ENCODE measurements at regions of chr15 and their contacts with region 1.

Region 1: DNA sequence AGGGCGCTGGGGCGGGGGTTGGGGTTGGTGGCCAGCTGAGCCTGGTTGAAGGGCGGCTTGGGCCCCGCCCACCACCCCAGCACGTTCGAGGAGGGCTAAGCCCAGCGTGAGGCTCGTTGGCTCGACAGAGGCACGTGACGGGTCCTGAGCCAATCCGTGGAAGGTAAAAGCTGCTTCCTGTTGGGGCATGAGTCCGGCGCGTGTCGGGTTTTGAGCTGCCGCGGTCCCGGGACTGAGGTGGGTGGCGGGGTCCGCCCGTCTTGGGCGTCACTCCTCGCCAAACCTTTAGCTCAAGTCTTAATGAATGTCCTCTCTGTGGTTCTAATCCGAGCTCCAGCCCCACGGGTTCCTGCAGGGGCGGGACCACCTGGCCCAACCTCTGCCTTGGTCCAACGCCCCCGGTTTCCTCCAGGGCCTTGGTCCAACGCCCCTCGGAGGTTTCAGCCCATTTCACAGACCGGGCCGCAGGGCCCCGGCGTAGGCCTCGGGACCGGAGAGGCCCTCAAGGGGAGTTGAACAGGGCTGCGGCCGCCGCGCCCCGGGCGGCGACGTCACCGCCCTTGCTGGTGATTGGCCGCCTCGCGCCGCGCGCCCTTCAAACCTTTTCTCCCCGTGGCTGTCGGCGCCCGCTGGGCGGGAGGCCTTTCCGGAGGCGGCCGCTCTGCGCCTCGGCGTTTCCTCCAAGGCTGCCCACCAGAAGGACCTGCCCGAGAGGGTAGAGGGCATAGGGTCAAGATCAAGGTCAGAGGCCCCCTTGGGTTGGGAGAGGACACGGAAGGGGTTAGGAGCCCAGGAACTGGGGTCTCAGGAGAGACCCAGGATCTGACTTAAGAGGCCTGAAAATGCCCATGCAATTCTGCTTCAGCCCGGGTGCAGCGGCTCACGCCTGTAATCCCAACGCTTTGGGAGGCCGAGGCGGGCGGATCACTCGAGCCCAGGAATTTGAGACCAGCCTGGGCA is at the start of gene RCCD1:
- DNase-seq: peak; percentile 94 to 99 (median 97)

Region 2: GRCh38 chr15:90982135-90982534 is 27.1 kb after region 1 on chr15:
- intact Hi-C with region 1: no loop called
- DNase-seq: no peak

Region 3: GRCh38 chr15:90994417-90995311 is 39.7 kb after region 1 on chr15 and contains the start of gene PRC1:
- intact Hi-C with region 1: no loop called
- DNase-seq: peak; percentile 93 to 99 (median 99)

Region 4: GRCh38 chr15:91022075-91022835 is 67.3 kb after region 1 on chr15 and contains the start of gene VPS33B:
- intact Hi-C with region 1: loop called (anchors 10 kb)
- DNase-seq: peak; percentile 78 to 96 (median 90)

Region 5: DNA sequence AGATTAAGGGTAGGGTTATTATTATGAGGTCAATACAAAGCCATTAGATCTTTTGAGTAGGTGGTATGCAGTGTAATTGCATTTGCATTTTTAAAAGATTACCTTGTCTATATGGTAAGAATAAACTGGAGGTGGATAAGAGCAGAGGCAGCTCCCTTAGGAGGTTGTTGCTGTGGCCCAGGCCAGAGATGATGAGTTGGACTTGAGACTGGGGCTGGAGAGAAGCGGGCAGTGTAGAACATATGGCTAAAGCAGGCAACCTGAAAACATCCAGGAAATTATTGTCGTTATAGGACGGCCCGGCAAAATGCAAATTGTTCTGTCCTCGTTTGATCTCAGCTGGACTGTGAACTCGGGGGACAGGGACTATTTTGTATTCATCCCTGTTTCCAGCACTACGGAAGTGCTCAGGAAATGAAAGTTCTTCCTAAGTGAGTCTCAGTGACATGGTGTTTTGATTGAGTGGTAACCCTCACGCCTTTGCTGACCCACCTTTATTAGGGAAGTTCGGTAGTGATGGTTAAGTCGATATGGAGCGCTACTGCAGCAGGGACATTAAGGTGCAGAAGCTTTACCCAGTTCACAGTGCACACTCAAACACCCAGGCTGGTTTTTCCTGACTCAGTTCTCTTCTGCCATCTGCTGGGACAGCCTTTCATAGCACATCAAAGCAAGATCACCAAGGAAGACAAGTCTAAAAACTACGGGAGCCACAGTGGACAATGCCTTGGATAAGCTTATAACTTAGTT is 94.6 kb after region 1 on chr15:
- intact Hi-C with region 1: loop called (anchors 5 kb)
- DNase-seq: peak in 41 of 42 donors; percentile 37 to 89 (median 70)

Region 6: GRCh38 chr15:91271565-91272153 is 316.7 kb after region 1 on chr15:
- intact Hi-C with region 1: loop called (anchors 5 kb)
- DNase-seq: peak; percentile 18 to 89 (median 68)

Measured in head of caudate nucleus (tissue), 42 donors.